ENCODE measurements at regions of chr10 and their contacts with region 1.

Region 1: GRCh38 chr10:96586419-96587263 is at the start of gene TM9SF3:
- DNase-seq: peak; percentile 89 to 94 (median 90)
- H3K4me3 ChIP-seq: peak within 1 kb of the TSS; percentile 18 to 57
- H3K4me3 Mint-ChIP-seq: peak within 1 kb of the TSS; percentile 84 to 98 (median 90)
- H3K27ac ChIP-seq: peak within 1 kb of the TSS; percentile 99
- H3K27ac Mint-ChIP-seq: peak within 1 kb of the TSS; percentile 94 to 98 (median 97)
- H3K4me1 ChIP-seq: peaks cover 64% of the 10 kb centered on the region
- H3K4me1 Mint-ChIP-seq: peaks cover 24 to 43% (median 32%) of the 10 kb centered on the region in 4 donors
- H3K27me3 ChIP-seq: no peaks in the 10 kb centered on the region
- H3K27me3 Mint-ChIP-seq: no peaks in the 10 kb centered on the region
- total RNA-seq, gene TM9SF3: 109 to 110 TPM

Region 2: GRCh38 chr10:95561182-95562075 is 1025.2 kb before region 1 on chr10 and contains the start of gene SORBS1:
- CTCF ChIA-PET with region 1: no interaction called
- POLR2A ChIA-PET with region 1: no interaction called
- intact Hi-C with region 1: loop called (anchors 10 kb)
- DNase-seq: peak; percentile 85 to 92 (median 87)
- H3K4me3 ChIP-seq: peak within 1 kb of the TSS; percentile 90 to 92
- H3K4me3 Mint-ChIP-seq: peak within 1 kb of the TSS; percentile 96 to 100 (median 100)
- H3K27ac ChIP-seq: peak within 1 kb of the TSS; percentile 54
- H3K27ac Mint-ChIP-seq: peak within 1 kb of the TSS; percentile 83 to 99 (median 96)
- H3K4me1 ChIP-seq: peaks cover 10% of the 10 kb centered on the region
- H3K4me1 Mint-ChIP-seq: peaks cover 8 to 23% (median 11%) of the 10 kb centered on the region in 4 donors
- H3K27me3 ChIP-seq: no peaks in the 10 kb centered on the region
- H3K27me3 Mint-ChIP-seq: peaks cover 0 to 4% of the 10 kb centered on the region in 2 donors
- total RNA-seq, gene SORBS1: 0.67 to 0.93 TPM

Region 3: DNA sequence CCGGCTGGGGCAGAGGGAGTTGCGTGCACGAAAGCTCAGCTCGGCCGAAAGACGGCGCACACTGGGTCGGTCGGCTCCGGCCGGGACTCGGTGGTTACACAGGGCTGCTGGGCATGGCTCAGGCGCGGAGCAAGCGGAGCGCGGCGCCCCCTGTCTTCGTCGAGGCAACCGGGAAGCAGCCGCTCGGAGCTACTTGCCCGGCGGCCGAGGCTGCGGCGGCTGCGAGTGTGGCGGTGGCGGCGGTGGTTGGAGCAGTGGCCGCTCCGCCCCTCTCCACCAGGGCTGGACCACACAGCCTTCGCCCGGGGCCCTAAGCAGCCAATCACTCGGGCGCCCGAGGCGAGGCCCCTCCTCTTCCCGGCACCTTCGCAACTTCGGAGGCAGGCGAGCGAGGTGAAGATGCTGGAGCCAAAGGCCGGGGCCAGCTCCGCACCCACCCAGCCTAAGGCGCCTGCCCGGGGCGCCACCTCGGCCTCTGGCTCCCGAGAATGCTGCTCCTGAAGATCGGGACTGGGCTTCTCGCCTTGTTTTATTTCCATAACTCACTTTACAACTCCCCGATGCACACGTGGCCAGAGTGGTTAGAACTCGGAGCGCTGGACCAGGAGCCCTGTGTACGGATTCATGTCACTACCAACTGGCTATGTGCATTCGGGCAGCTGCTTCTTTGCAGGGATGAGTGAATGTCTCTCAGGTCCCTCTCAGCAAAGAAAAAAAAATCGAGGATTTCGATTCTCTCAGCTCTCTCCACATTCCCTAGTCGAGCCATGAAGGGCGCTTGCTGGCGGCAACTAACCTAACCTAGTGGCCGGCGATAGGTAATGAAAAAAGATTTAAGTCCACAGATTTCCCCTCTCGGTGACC is 72.7 kb before region 1 on chr10 and contains the start of gene TLL2:
- CTCF ChIA-PET with region 1: no interaction called
- POLR2A ChIA-PET with region 1: interaction called, 3 read pairs
- intact Hi-C with region 1: loop called (anchors 5 kb)
- DNase-seq: peak; percentile 26 to 54 (median 39)
- H3K4me3 ChIP-seq: peak within 1 kb of the TSS; percentile 15 to 55
- H3K4me3 Mint-ChIP-seq: peak within 1 kb of the TSS; percentile 81 to 86 (median 84)
- H3K27ac ChIP-seq: no peak within 1 kb of the TSS
- H3K27ac Mint-ChIP-seq: peak within 1 kb of the TSS in 2 of 7 donors; percentile 56 to 67
- H3K4me1 ChIP-seq: peaks cover 23% of the 10 kb centered on the region
- H3K4me1 Mint-ChIP-seq: peaks cover 10 to 23% (median 16%) of the 10 kb centered on the region in 4 donors
- H3K27me3 ChIP-seq: peaks cover 10% of the 10 kb centered on the region
- H3K27me3 Mint-ChIP-seq: peaks cover 4 to 6% of the 10 kb centered on the region in 2 donors
- total RNA-seq, gene TLL2: 0.17 TPM in 1 of 2 experiments, not detected in the other

Region 4: DNA sequence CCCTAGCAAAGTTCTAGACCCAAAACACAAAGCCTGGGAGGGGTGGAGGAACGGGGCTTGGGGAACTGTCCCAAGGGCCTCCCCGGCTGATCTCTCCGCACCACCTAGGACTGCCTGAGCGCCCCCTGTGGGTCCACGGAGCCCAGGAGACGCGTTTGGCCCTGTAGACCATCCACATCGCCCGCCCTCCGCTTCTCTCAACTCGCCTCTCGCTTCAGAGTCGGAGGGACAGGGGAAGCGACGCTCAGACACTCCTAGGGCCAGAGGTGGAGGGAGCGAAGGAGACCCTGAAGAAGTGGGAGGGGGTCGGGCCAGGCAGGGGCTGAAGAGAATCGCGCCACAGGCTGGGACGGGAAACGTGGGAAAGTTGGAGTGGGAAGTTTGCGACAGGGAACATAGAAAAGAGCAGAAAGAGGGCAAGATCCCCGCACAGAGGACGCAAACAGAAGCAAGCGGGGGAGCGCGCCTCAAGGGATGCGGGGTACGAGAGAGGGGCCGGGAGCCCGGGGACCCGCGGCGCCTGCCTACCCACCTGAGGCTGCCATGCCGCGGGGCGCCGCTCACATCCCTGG is 133.3 kb after region 1 on chr10:
- CTCF ChIA-PET with region 1: no interaction called
- POLR2A ChIA-PET with region 1: no interaction called
- intact Hi-C with region 1: loop called (anchors 2 kb)
- DNase-seq: peak in 4 of 5 donors; percentile 5 to 44 (median 12)
- H3K4me3 ChIP-seq: peak overlapping the region in 1 of 2 donors; percentile 61
- H3K4me3 Mint-ChIP-seq: peak overlapping the region; percentile 89 to 97 (median 92)
- H3K27ac ChIP-seq: no peak overlapping the region
- H3K27ac Mint-ChIP-seq: peak overlapping the region in 5 of 7 donors; percentile 44 to 84 (median 71)
- H3K4me1 ChIP-seq: peaks cover 15% of the 10 kb centered on the region
- H3K4me1 Mint-ChIP-seq: peaks cover 12 to 20% (median 16%) of the 10 kb centered on the region in 4 donors
- H3K27me3 ChIP-seq: no peaks in the 10 kb centered on the region
- H3K27me3 Mint-ChIP-seq: no peaks in the 10 kb centered on the region

Region 5: DNA sequence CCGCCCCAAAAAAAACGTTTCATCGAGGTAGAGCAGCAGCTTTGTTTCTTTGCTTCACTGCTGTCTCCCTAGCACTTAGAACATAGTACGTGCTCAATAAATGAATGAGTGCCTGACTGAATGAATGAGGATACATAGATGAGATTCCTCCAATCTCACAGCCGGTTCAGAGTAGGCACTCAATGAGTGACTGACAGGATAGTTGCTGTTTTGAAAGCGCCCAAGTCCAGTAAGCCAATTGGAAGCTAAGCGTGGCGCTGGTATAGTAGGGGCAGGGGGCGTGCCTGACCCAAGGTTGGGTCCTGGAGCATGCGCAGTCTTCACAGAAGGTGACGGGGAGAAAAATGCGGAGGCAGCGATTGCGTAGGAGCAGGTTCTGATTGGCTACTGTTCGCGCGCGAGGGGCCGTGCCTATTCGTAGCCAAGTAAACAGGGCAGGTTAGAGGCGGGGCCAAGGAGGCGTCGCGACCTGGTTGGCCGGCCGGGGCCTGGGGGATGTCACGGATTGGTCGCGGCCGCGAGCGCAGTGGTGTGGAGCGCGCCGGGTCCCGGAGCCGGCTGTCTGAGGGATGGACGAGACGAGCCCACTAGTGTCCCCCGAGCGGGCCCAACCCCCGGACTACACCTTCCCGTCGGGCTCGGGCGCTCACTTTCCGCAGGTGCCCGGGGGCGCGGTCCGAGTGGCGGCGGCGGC is 1053.7 kb after region 1 on chr10 and contains the start of gene PI4K2A:
- CTCF ChIA-PET with region 1: no interaction called
- POLR2A ChIA-PET with region 1: no interaction called
- intact Hi-C with region 1: loop called (anchors 10 kb)
- DNase-seq: peak; percentile 98 to 99 (median 98)
- H3K4me3 ChIP-seq: peak within 1 kb of the TSS; percentile 83 to 97
- H3K4me3 Mint-ChIP-seq: peak within 1 kb of the TSS; percentile 94 to 99 (median 97)
- H3K27ac ChIP-seq: peak within 1 kb of the TSS; percentile 68
- H3K27ac Mint-ChIP-seq: peak within 1 kb of the TSS; percentile 84 to 97 (median 91)
- H3K4me1 ChIP-seq: peaks cover 15% of the 10 kb centered on the region
- H3K4me1 Mint-ChIP-seq: peaks cover 17 to 28% (median 21%) of the 10 kb centered on the region in 4 donors
- H3K27me3 ChIP-seq: no peaks in the 10 kb centered on the region
- H3K27me3 Mint-ChIP-seq: no peaks in the 10 kb centered on the region
- total RNA-seq, gene PI4K2A: 9.8 to 9.9 TPM

Measured in CD4-positive, alpha-beta memory T cell (primary cell).